ENCODE measurements at regions of chr10 and their contacts with region 1.

Region 1: GRCh38 chr10:110137142-110137545 is 70.3 kb upstream of the MXI1 start:
- DNase-seq: peak; percentile 59
- H3K4me3 ChIP-seq: no peak overlapping the region
- H3K27ac ChIP-seq: peak overlapping the region in 1 of 2 experiments; percentile 39; a peak in 1 of 4 replicates
- H3K4me1 ChIP-seq: peaks cover 0 to 5% of the 10 kb centered on the region in 2 experiments; a peak in 1 of 4 replicates
- H3K27me3 ChIP-seq: no peaks in the 10 kb centered on the region
- CTCF ChIP-seq: peak; percentile 80
- EP300 ChIP-seq: no peak
- RAD21 ChIP-seq: peak; percentile 89

Region 2: DNA sequence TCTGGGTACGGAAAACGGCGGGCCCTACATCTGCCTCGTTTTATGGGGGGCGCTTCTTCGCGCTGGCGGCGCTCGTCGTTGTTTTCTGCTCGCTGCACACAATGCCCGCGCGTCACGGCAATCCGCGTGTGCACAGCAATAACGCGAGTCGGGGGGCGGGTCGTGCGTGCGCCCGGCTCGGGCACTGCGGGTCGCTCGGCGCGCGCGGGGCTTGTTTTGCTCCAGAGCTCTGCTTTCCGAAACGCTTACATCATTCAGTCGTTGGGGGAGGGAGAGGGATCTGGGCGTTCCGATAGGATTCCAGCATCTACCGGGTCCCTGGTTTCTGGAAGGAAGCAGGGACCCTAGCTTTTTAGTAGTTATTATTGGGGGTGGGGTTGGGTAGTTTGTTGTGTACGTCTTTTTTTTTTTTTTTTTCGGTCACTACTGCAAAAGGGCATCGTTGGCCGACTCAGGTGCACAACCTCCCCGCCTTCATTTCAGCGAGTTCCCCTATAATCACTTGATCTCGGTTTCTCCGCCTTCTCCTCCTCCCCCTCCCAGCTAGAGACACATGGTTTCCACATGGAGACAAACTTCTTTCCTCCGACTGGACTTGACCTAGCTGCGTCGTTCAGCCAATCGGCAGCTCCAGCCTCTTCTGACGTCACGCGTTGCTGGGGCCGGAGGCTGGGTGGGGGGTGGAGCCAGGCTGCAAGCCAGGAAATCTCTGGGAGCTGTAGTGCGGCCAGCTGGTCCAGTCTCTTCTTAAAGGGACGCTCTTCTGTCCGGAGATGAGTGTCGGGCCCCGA is 73.7 kb after region 1 on chr10:
- CTCF ChIA-PET with region 1: interaction called, 51 read pairs
- POLR2A ChIA-PET with region 1: interaction called, 4 read pairs
- DNase-seq: peak; percentile 95
- H3K4me3 ChIP-seq: peak overlapping the region; percentile 79 to 88
- H3K27ac ChIP-seq: peak overlapping the region; percentile 76 to 97
- H3K4me1 ChIP-seq: peaks cover 0 to 15% of the 10 kb centered on the region in 2 experiments; a peak in 3 of 4 replicates
- H3K27me3 ChIP-seq: no peaks in the 10 kb centered on the region
- CTCF ChIP-seq: no peak
- EP300 ChIP-seq: no peak
- RAD21 ChIP-seq: no peak

Region 3: DNA sequence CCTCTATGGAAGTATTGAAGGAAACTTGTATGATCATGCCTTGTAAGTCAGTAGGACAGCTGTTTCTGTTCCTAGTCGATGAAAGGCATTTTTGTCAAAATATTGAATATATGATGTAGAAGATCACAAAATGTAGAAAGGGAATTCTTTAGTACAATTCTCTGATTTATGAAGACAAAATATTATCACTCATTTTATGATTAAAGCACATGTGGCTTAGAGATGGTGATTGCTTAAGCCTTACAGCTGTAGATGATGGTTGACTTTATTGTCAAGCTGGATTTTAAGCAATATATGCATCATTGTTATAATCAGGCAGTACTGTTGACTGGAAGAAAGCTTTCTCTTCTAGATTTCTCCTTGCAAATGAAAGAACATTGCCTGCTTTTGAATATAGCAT is 96.7 kb after region 1 on chr10:
- CTCF ChIA-PET with region 1: interaction called, 11 read pairs
- POLR2A ChIA-PET with region 1: no interaction called
- DNase-seq: no peak
- H3K4me3 ChIP-seq: no peak overlapping the region
- H3K27ac ChIP-seq: no peak overlapping the region
- H3K4me1 ChIP-seq: no peaks in the 10 kb centered on the region; a peak in 1 of 4 replicates
- H3K27me3 ChIP-seq: no peaks in the 10 kb centered on the region
- CTCF ChIP-seq: no peak
- EP300 ChIP-seq: no peak
- RAD21 ChIP-seq: no peak

Region 4: DNA sequence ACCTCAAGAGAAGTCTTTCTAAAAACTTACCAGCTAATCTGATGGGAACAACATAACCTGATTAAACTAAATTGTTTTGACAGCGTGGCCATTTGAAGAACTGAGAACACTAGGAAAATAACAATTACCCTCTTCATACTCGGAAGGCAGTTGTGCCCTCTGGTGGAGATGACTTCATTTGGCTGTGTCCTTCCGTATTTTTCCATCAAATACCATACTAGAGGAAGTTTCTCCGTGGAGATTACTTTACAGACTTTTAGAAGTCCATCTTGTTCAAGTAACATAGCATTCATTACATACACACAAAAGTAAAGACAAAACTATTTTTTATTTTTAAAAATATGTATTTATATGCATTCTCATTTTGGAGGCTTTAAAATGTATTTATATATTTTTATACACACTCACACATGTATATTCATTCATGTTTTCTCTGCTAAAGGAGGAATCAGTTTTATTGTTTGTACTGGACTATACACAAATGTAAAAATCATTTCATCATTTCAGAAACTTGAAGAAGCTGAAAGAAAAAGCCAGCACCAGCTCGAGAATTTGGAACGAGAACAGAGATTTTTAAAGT is 142.4 kb after region 1 on chr10:
- CTCF ChIA-PET with region 1: interaction called, 44 read pairs
- POLR2A ChIA-PET with region 1: interaction called, 3 read pairs
- DNase-seq: peak; percentile 54
- H3K4me3 ChIP-seq: no peak overlapping the region
- H3K27ac ChIP-seq: no peak overlapping the region
- H3K4me1 ChIP-seq: peaks cover 3 to 5% of the 10 kb centered on the region in 2 experiments; a peak in 1 of 4 replicates
- H3K27me3 ChIP-seq: no peaks in the 10 kb centered on the region
- CTCF ChIP-seq: peak; percentile 86
- EP300 ChIP-seq: no peak
- RAD21 ChIP-seq: peak; percentile 88

Region 5: GRCh38 chr10:110304780-110305421 is 167.8 kb after region 1 on chr10 and contains the start of gene SMNDC1:
- CTCF ChIA-PET with region 1: interaction called, 10 read pairs
- POLR2A ChIA-PET with region 1: no interaction called
- DNase-seq: peak; percentile 95
- H3K4me3 ChIP-seq: peak within 1 kb of the TSS; percentile 86 to 94
- H3K27ac ChIP-seq: peak within 1 kb of the TSS; percentile 93 to 95
- H3K4me1 ChIP-seq: peaks cover 13 to 18% of the 10 kb centered on the region in 2 experiments; a peak in 3 of 4 replicates
- H3K27me3 ChIP-seq: no peaks in the 10 kb centered on the region
- CTCF ChIP-seq: no peak
- EP300 ChIP-seq: no peak
- RAD21 ChIP-seq: no peak
- polyA plus RNA-seq, gene SMNDC1: 13.3 and 14.2 TPM in 2 replicates

Measured in SK-N-SH (cell line).